Uterus (tissue), 4 donors: ENCODE measurements at regions of chr6 and their contacts with region 1.

Region 1: DNA sequence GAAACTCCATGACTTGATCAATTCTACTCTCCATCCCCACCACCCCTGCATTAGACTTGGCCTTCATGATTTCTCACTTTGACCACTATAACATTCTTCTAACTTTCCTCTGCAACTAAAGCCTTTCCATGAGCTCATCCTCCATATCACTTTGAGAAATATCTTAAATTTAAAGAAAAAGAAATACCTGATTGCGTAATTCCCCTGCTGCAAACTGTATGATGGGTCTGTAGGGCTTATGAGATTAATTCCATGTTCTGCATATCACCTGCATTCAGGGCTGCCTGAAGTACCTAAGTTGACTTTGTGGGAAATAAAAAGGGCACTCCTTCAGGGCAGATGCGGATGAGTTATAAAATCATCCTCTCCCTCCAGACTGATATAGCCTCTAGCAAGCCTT is 549.8 kb downstream of the LMBRD1 start:
- DNase-seq: no peak
- H3K4me3 ChIP-seq: no peak overlapping the region
- H3K27ac ChIP-seq: no peak overlapping the region
- H3K4me1 ChIP-seq: no peaks in the 10 kb centered on the region
- H3K27me3 ChIP-seq: no peaks in the 10 kb centered on the region
- CTCF ChIP-seq: no peak
- POLR2A ChIP-seq: no peak

Region 2: DNA sequence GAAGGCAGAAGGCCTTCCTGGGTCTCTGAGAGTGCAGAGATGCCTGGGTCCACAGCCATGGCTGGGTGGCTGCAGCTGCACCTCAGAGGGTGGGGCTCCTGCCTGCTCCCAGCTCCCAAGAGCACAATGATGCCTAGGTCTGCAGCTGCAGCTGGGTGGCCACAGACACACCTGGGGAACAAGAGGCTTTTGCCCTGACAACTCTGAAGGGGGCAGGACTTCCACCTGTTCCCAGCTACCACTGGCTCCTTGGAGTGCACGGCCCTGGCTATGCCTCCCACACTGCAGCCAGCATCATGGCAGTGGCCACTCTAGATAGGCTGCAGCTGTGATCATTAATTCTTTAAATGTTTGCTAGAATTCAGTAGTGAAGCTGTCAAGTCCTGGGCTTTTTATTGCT is 100.6 kb before region 1 on chr6:
- intact Hi-C with region 1: no loop called
- DNase-seq: no peak
- H3K4me3 ChIP-seq: no peak overlapping the region
- H3K27ac ChIP-seq: no peak overlapping the region
- H3K4me1 ChIP-seq: no peaks in the 10 kb centered on the region
- H3K27me3 ChIP-seq: no peaks in the 10 kb centered on the region
- CTCF ChIP-seq: no peak
- POLR2A ChIP-seq: no peak

Region 3: GRCh38 chr6:69265706-69266105 is 18.7 kb after region 1 on chr6:
- intact Hi-C with region 1: loop called (anchors 2 kb)
- DNase-seq: no peak
- H3K4me3 ChIP-seq: no peak overlapping the region
- H3K27ac ChIP-seq: no peak overlapping the region
- H3K4me1 ChIP-seq: no peaks in the 10 kb centered on the region
- H3K27me3 ChIP-seq: no peaks in the 10 kb centered on the region
- CTCF ChIP-seq: no peak
- POLR2A ChIP-seq: no peak